ENCODE measurements at regions of chr14 and their contacts with region 1.

Region 1: GRCh38 chr14:22986508-22987054 is 4.2 kb upstream of the AJUBA start:
- DNase-seq: peak; percentile 77 to 93 (median 89)
- ATAC-seq: peak; percentile 69
- H3K4me3 ChIP-seq: no peak overlapping the region
- H3K4me3 Mint-ChIP-seq: no peak overlapping the region
- H3K27ac ChIP-seq: no peak overlapping the region
- H3K27ac Mint-ChIP-seq: no peak overlapping the region
- H3K4me1 ChIP-seq: peaks cover 7% of the 10 kb centered on the region
- H3K4me1 Mint-ChIP-seq: no peaks in the 10 kb centered on the region
- H3K27me3 ChIP-seq: peaks cover 0 to 6% of the 10 kb centered on the region in 2 experiments
- H3K27me3 Mint-ChIP-seq: no peaks in the 10 kb centered on the region
- CTCF ChIP-seq: peak; percentile 96

Region 2: DNA sequence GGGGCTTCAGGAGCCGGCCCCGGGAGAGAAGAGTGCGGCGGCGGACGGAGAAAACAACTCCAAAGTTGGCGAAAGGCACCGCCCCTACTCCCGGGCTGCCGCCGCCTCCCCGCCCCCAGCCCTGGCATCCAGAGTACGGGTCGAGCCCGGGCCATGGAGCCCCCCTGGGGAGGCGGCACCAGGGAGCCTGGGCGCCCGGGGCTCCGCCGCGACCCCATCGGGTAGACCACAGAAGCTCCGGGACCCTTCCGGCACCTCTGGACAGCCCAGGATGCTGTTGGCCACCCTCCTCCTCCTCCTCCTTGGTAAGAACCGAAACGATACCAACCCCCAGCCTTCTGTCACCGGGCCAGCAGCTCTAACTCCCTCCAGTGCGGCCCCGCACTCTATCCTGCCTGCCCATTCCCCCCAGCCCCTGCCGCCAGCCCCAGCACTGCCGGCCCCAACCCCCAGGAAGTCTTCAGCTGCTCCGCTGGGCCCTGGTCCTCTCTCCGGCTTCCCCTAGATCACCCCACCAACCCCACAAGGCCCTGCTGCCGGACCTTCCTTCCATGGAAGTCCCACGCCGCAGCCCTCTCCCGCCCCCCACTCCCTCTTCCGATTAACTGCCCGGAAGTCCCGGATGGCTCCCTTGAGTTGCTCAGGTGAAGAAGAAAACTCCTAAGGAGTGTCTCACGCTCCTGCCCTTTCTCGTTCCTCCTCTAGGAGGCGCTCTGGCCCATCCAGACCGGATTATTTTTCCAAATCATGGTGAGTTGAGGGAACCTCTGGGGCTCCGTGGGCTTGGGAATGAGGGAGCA is 114.3 kb before region 1 on chr14:
- CTCF ChIA-PET with region 1: interaction called, 5 read pairs
- POLR2A ChIA-PET with region 1: no interaction called
- intact Hi-C with region 1: loop called in 1 of 2 experiments (anchors 1 kb)
- DNase-seq: peak; percentile 47 to 82 (median 73)
- ATAC-seq: peak; percentile 46
- H3K4me3 ChIP-seq: peak overlapping the region; percentile 82 to 83
- H3K4me3 Mint-ChIP-seq: peak overlapping the region; percentile 91
- H3K27ac ChIP-seq: peak overlapping the region; percentile 85 to 94
- H3K27ac Mint-ChIP-seq: peak overlapping the region; percentile 99
- H3K4me1 ChIP-seq: peaks cover 28% of the 10 kb centered on the region
- H3K4me1 Mint-ChIP-seq: peaks cover 36% of the 10 kb centered on the region
- H3K27me3 ChIP-seq: no peaks in the 10 kb centered on the region
- H3K27me3 Mint-ChIP-seq: no peaks in the 10 kb centered on the region
- CTCF ChIP-seq: peak; percentile 86

Region 3: GRCh38 chr14:22945642-22946041 is 40.9 kb before region 1 on chr14:
- CTCF ChIA-PET with region 1: interaction called, 10 read pairs
- POLR2A ChIA-PET with region 1: interaction called, 3 read pairs
- intact Hi-C with region 1: no loop called
- DNase-seq: no peak
- ATAC-seq: no peak
- H3K4me3 ChIP-seq: no peak overlapping the region
- H3K4me3 Mint-ChIP-seq: no peak overlapping the region
- H3K27ac ChIP-seq: no peak overlapping the region
- H3K27ac Mint-ChIP-seq: no peak overlapping the region
- H3K4me1 ChIP-seq: no peaks in the 10 kb centered on the region
- H3K4me1 Mint-ChIP-seq: peaks cover 2% of the 10 kb centered on the region
- H3K27me3 ChIP-seq: no peaks in the 10 kb centered on the region
- H3K27me3 Mint-ChIP-seq: no peaks in the 10 kb centered on the region
- CTCF ChIP-seq: no peak

Region 4: GRCh38 chr14:22973217-22974032 is 13.2 kb before region 1 on chr14:
- CTCF ChIA-PET with region 1: interaction called, 207 read pairs
- POLR2A ChIA-PET with region 1: interaction called, 5 read pairs
- intact Hi-C with region 1: loop called (anchors 1 kb)
- DNase-seq: peak in 7 of 9 experiments; percentile 30 to 70 (median 45)
- ATAC-seq: peak; percentile 52
- H3K4me3 ChIP-seq: no peak overlapping the region
- H3K4me3 Mint-ChIP-seq: no peak overlapping the region
- H3K27ac ChIP-seq: no peak overlapping the region
- H3K27ac Mint-ChIP-seq: no peak overlapping the region
- H3K4me1 ChIP-seq: no peaks in the 10 kb centered on the region
- H3K4me1 Mint-ChIP-seq: no peaks in the 10 kb centered on the region
- H3K27me3 ChIP-seq: no peaks in the 10 kb centered on the region
- H3K27me3 Mint-ChIP-seq: peaks cover 2% of the 10 kb centered on the region
- CTCF ChIP-seq: peak; percentile 64

Region 5: DNA sequence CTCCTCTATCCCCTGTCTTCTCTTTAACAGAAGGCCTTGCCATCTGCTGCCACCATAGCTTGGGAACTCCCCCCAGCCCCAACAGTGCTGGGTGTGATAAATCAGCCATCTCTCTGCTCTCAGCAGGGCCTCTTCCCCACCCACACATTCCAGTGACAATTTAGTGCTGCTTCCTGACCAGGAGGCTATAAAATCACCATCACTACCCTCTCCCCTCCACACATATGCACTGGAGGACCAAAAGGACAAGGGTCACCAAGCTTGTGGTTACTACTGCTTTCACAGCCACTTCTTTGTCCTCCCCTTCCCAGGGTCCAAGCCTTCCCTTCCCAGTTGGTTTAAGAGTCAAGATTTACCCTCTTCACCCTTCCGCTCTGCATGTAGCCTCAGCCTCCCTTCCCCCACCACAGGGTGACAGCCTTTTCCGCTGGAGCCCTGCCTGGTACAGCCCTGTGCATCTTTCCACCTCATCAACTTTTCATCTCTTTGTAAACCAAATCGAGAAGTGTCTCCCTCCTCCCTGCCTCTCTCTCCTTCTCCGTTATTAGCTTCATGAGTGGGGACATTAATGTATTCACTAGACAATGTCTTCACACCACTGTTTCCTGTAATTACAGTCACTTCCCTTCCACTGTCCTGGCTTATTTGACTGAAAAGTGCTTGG is 38.7 kb after region 1 on chr14:
- CTCF ChIA-PET with region 1: interaction called, 10 read pairs
- POLR2A ChIA-PET with region 1: interaction called, 4 read pairs
- intact Hi-C with region 1: no loop called
- DNase-seq: no peak
- ATAC-seq: no peak
- H3K4me3 ChIP-seq: no peak overlapping the region
- H3K4me3 Mint-ChIP-seq: no peak overlapping the region
- H3K27ac ChIP-seq: no peak overlapping the region
- H3K27ac Mint-ChIP-seq: peak overlapping the region; percentile 72
- H3K4me1 ChIP-seq: peaks cover 32% of the 10 kb centered on the region
- H3K4me1 Mint-ChIP-seq: peaks cover 66% of the 10 kb centered on the region
- H3K27me3 ChIP-seq: no peaks in the 10 kb centered on the region
- H3K27me3 Mint-ChIP-seq: no peaks in the 10 kb centered on the region
- CTCF ChIP-seq: no peak

Region 6: DNA sequence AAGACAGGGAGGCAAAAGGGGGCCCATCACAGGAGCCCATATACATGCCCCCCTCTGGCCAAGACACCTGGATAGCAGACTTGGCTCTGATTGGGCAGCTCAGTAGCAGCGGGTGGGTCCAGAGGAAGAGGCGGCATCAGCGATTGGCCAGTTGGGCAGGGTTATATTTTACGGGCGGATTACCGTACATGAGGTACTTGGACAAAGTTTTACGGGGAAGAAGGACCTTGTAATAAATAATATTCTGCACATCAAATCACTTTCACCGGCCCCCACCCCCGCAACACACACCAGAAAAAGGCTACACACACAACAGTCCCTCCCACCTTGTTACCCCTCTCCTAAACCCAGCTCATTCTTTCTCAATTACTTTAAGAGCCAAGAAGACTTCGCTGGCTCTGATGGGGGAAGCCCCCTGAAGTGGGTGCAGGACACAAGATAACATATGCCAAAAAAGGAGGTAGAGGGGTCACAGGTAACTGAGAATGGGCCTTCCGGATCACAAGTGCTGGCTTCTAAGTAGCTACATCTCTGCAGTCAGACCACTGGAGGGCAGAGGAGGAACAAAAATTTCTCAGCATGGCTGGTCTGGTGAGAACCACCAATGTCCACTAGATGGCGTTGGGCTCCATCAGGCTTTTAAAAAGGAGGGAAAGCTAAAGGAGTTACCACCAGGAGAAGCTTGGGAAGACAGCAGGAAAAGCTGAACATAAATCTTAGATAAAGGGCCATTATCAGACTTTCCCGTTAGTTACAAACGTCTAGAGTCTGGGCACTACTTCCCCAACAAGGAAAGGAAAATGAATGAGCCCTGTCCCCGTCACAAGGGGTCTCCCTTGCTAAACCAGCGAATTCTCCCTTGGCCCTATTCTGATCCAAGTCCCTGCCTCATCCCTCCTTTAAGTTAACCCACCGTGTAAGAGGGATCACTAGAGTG is 82.2 kb after region 1 on chr14:
- CTCF ChIA-PET with region 1: interaction called, 1,218 read pairs
- POLR2A ChIA-PET with region 1: interaction called, 3 read pairs
- intact Hi-C with region 1: no loop called
- DNase-seq: peak; percentile 52 to 90 (median 73)
- ATAC-seq: peak; percentile 76
- H3K4me3 ChIP-seq: no peak overlapping the region
- H3K4me3 Mint-ChIP-seq: no peak overlapping the region
- H3K27ac ChIP-seq: no peak overlapping the region
- H3K27ac Mint-ChIP-seq: peak overlapping the region; percentile 39
- H3K4me1 ChIP-seq: peaks cover 28% of the 10 kb centered on the region
- H3K4me1 Mint-ChIP-seq: peaks cover 46% of the 10 kb centered on the region
- H3K27me3 ChIP-seq: no peaks in the 10 kb centered on the region
- H3K27me3 Mint-ChIP-seq: no peaks in the 10 kb centered on the region
- CTCF ChIP-seq: peak; percentile 99